ENCODE measurements at regions of chr20 and their contacts with region 1.

Region 1: GRCh38 chr20:45934586-45935415 is at the start of gene PCIF1:
- DNase-seq: peak; percentile 97 to 100 (median 98)
- ATAC-seq: peak; percentile 77
- H3K4me3 ChIP-seq: peak within 1 kb of the TSS; percentile 100
- H3K4me3 Mint-ChIP-seq: peak within 1 kb of the TSS; percentile 98
- H3K27ac ChIP-seq: peak within 1 kb of the TSS; percentile 96 to 99
- H3K27ac Mint-ChIP-seq: peak within 1 kb of the TSS; percentile 97
- H3K4me1 ChIP-seq: peaks cover 40% of the 10 kb centered on the region
- H3K4me1 Mint-ChIP-seq: peaks cover 34% of the 10 kb centered on the region
- H3K27me3 ChIP-seq: no peaks in the 10 kb centered on the region
- H3K27me3 Mint-ChIP-seq: no peaks in the 10 kb centered on the region
- CTCF ChIP-seq: no peak
- total RNA-seq, gene PCIF1: 100 TPM

Region 2: DNA sequence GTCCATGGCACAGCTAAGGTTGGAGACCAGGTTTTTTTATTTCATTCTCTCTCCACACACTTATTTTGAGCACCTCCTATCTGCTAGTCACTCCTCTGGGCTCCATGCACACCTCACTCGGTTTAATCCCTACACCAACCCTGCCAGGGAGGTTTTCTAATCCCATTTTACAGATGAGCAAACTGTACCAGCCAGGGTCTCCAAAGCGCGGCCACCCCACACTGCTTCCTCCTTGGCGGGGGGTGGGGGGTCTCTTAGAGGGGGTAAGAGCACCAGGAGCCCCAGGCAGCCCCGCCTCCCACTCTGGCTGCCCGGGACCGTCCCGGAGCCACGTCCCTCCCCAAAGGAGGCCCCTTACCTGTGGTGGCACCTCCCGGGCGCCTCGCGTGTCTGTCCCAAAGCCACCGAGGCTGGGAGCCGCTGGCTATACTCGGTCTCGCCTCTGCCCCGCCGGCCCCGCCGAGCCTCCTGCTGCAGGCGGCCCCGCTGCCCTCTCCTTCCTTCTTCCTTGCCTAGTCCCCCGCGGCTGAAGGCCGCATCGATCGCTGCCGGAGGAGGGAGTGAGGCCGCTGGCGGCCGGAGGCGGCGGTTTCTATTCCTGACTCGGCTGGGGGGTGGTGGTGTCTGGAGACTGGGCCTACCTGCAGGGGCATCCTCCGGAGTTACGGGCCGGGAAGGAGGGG is 834.1 kb before region 1 on chr20 and contains the start of gene KCNS1:
- CTCF ChIA-PET with region 1: no interaction called
- POLR2A ChIA-PET with region 1: no interaction called
- intact Hi-C with region 1: no loop called
- DNase-seq: no peak
- ATAC-seq: no peak
- H3K4me3 ChIP-seq: no peak within 1 kb of the TSS
- H3K4me3 Mint-ChIP-seq: no peak within 1 kb of the TSS
- H3K27ac ChIP-seq: no peak within 1 kb of the TSS
- H3K27ac Mint-ChIP-seq: no peak within 1 kb of the TSS
- H3K4me1 ChIP-seq: peaks cover 17% of the 10 kb centered on the region
- H3K4me1 Mint-ChIP-seq: peaks cover 14% of the 10 kb centered on the region
- H3K27me3 ChIP-seq: peaks cover 25 to 49% of the 10 kb centered on the region in 2 experiments
- H3K27me3 Mint-ChIP-seq: peaks cover 67% of the 10 kb centered on the region
- CTCF ChIP-seq: no peak
- total RNA-seq, gene KCNS1: not detected

Region 3: GRCh38 chr20:45373353-45374100 is 561.3 kb before region 1 on chr20:
- CTCF ChIA-PET with region 1: interaction called, 3 read pairs
- POLR2A ChIA-PET with region 1: interaction called, 11 read pairs
- intact Hi-C with region 1: no loop called
- DNase-seq: peak; percentile 84 to 95 (median 89)
- ATAC-seq: peak; percentile 89
- H3K4me3 ChIP-seq: peak overlapping the region; percentile 63
- H3K4me3 Mint-ChIP-seq: peak overlapping the region; percentile 90
- H3K27ac ChIP-seq: peak overlapping the region; percentile 62 to 73
- H3K27ac Mint-ChIP-seq: peak overlapping the region; percentile 96
- H3K4me1 ChIP-seq: peaks cover 32% of the 10 kb centered on the region
- H3K4me1 Mint-ChIP-seq: peaks cover 46% of the 10 kb centered on the region
- H3K27me3 ChIP-seq: no peaks in the 10 kb centered on the region
- H3K27me3 Mint-ChIP-seq: no peaks in the 10 kb centered on the region
- CTCF ChIP-seq: peak; percentile 86

Region 4: DNA sequence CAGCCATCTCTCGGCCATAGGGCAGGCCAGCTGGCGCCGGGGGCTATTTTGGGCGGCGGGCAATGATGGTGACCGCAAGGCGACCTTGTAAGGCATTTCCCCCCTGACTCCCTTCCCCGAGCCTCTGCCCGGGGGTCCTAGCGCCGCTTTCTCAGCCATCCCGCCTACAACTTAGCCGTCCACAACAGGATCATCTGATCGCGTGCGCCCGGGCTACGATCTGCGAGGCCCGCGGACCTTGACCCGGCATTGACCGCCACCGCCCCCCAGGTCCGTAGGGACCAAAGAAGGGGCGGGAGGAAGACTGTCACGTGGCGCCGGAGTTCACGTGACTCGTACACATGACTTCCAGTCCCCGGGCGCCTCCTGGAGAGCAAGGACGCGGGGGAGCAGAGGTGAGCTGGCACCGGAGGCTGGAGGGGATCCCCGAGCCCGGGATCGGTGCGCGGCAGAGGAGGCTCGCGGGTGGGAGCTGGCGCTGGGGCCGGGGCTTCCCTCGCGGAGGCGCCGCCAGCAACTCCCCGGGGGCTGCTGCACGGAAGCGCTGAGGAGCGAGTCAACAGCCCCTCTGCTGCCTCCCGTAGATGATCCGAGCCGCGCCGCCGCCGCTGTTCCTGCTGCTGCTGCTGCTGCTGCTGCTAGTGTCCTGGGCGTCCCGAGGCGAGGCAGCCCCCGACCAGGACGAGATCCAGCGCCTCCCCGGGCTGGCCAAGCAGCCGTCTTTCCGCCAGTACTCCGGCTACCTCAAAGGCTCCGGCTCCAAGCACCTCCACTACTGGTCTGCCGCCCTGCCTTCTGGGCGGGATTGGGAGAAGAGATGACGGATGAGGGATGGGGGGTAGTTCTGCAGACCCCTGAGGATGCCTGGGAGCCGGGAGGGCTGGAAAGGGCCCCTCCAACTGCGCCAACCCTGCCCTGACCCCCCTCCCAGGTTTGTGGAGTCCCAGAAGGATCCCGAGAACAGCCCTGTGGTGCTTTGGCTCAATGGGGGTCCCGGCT is 43.5 kb before region 1 on chr20 and contains the starts of genes CTSA and NEURL2:
- CTCF ChIA-PET with region 1: interaction called, 7 read pairs
- POLR2A ChIA-PET with region 1: interaction called, 105 read pairs
- intact Hi-C with region 1: loop called (anchors 1 to 2 kb)
- DNase-seq: peak; percentile 64 to 92 (median 76)
- ATAC-seq: peak; percentile 79
- H3K4me3 ChIP-seq: peak within 1 kb of the TSS; percentile 93
- H3K4me3 Mint-ChIP-seq: peak within 1 kb of the TSS; percentile 96
- H3K27ac ChIP-seq: peak within 1 kb of the TSS; percentile 50 to 65
- H3K27ac Mint-ChIP-seq: peak within 1 kb of the TSS; percentile 84
- H3K4me1 ChIP-seq: peaks cover 48% of the 10 kb centered on the region
- H3K4me1 Mint-ChIP-seq: peaks cover 51% of the 10 kb centered on the region
- H3K27me3 ChIP-seq: no peaks in the 10 kb centered on the region
- H3K27me3 Mint-ChIP-seq: no peaks in the 10 kb centered on the region
- CTCF ChIP-seq: no peak
- total RNA-seq, gene CTSA: 40.3 to 42.6 TPM
- total RNA-seq, gene NEURL2: 1.5 to 2.5 TPM

Region 5: GRCh38 chr20:45924391-45925261 is 10.2 kb before region 1 on chr20:
- CTCF ChIA-PET with region 1: no interaction called
- POLR2A ChIA-PET with region 1: interaction called, 20 read pairs
- intact Hi-C with region 1: no loop called
- DNase-seq: no peak
- ATAC-seq: no peak
- H3K4me3 ChIP-seq: no peak overlapping the region
- H3K4me3 Mint-ChIP-seq: no peak overlapping the region
- H3K27ac ChIP-seq: no peak overlapping the region
- H3K27ac Mint-ChIP-seq: no peak overlapping the region
- H3K4me1 ChIP-seq: peaks cover 3% of the 10 kb centered on the region
- H3K4me1 Mint-ChIP-seq: peaks cover 4% of the 10 kb centered on the region
- H3K27me3 ChIP-seq: no peaks in the 10 kb centered on the region
- H3K27me3 Mint-ChIP-seq: peaks cover 7% of the 10 kb centered on the region
- CTCF ChIP-seq: no peak

Region 6: DNA sequence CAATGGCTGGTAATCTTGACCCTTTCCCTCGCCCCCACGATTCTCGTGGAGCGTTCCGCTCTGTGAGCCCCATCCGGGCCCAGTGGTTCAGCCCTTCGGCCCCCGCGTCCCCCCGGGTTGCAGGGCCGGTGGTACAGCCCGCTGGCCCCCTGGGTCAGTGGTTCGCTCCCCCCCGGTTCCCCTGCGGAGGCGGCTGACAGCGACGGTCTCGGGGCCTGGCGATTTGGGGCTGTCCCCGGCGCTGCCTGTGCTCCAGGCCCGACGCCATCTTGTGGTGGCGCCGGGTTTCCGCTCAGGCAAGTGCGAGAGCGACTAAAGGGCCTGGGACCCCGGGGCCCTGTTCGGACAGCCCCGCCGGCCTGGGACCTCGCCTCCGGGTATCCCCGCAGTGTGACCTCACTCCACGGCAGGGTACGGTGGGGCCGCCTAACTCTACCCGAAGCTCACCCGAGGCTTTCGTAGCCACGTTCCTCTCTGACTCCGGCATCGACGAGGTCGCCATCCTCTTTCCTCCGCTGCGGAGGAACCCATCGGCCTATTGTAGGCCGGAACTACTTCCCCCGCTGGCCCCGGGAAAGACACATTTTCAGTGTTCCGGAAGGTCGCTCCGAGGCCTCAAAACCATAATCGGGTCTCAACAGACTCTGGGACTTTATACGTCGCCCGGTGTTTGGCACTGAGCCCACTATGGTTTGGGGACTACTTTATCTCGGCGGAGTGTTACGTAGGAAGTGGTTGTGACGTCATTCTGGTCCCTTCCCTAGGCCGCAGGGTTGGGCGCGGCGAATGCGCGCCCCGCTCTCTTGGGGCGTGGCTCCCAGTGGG is 37.1 kb after region 1 on chr20 and contains the start of gene ZNF335:
- CTCF ChIA-PET with region 1: interaction called, 20 read pairs
- POLR2A ChIA-PET with region 1: interaction called, 195 read pairs
- intact Hi-C with region 1: loop called (anchors 1 kb)
- DNase-seq: peak; percentile 86 to 97 (median 94)
- ATAC-seq: peak; percentile 80
- H3K4me3 ChIP-seq: peak within 1 kb of the TSS; percentile 96
- H3K4me3 Mint-ChIP-seq: peak within 1 kb of the TSS; percentile 94
- H3K27ac ChIP-seq: peak within 1 kb of the TSS; percentile 99 to 100
- H3K27ac Mint-ChIP-seq: peak within 1 kb of the TSS; percentile 100
- H3K4me1 ChIP-seq: peaks cover 36% of the 10 kb centered on the region
- H3K4me1 Mint-ChIP-seq: peaks cover 28% of the 10 kb centered on the region
- H3K27me3 ChIP-seq: no peaks in the 10 kb centered on the region
- H3K27me3 Mint-ChIP-seq: peaks cover 4% of the 10 kb centered on the region
- CTCF ChIP-seq: no peak
- total RNA-seq, gene ZNF335: 67.3 to 74.6 TPM

Region 7: DNA sequence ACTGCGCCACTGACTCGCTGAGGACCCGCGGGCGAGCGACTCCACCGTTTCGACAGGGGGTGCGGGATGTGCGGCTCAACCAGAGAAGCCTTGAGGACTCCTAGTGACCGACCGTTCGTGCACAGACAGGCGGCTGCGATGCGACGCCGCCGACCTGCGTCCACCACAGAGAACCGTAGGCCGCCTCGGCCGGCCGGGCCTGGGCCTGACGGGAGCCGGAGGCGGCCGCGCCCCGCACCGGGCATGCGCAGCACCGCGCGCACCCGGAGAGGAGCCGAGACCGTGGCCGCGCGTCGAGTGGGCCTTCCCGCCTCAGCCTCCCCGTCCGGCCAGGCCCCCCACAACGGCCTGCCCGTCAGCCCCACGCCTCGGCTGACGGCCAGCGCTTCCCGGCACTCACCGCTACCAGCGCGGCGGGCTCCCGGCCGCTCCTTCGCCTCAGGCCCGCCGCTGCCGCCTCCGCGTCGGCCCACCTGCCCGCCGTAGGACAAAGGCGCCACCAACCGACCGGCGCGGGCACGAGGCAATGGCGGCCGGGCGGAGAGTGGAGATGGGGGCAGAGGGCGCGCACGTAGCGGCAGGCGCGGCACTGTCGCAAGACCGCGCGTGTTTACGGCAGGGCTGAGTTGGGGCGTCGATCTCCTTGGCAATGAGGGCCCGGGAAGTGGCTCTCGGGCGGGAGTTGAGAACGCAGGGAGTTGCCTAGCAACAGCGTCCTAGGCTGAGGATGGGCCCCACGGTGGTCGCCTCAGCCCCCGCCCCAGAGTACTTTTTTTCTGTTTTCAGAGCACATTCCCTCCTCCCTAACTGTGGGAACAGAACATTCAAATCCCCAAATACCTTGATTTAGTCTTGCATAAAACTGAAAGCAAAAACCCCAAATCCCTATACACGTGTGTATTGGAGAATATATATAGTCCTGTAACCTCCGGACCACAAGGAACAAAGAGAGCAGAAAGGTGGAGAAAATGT is 154.9 kb after region 1 on chr20 and contains the start of gene NCOA5:
- CTCF ChIA-PET with region 1: no interaction called
- POLR2A ChIA-PET with region 1: interaction called, 10 read pairs
- intact Hi-C with region 1: loop called in 1 of 2 experiments (anchors 2 kb)
- DNase-seq: peak; percentile 86 to 97 (median 92)
- ATAC-seq: peak; percentile 90
- H3K4me3 ChIP-seq: peak within 1 kb of the TSS; percentile 95
- H3K4me3 Mint-ChIP-seq: peak within 1 kb of the TSS; percentile 94
- H3K27ac ChIP-seq: peak within 1 kb of the TSS; percentile 67 to 85
- H3K27ac Mint-ChIP-seq: peak within 1 kb of the TSS; percentile 86
- H3K4me1 ChIP-seq: peaks cover 22% of the 10 kb centered on the region
- H3K4me1 Mint-ChIP-seq: peaks cover 54% of the 10 kb centered on the region
- H3K27me3 ChIP-seq: peaks cover 0 to 3% of the 10 kb centered on the region in 2 experiments
- H3K27me3 Mint-ChIP-seq: no peaks in the 10 kb centered on the region
- CTCF ChIP-seq: no peak
- total RNA-seq, gene NCOA5: 9.7 to 10.5 TPM